Activated CD4-positive, alpha-beta memory T cell treated with anti-CD3 and anti-CD28 coated beads for 36 hours (primary cell): ENCODE measurements at regions of chr19 and their contacts with region 1.

Region 1: DNA sequence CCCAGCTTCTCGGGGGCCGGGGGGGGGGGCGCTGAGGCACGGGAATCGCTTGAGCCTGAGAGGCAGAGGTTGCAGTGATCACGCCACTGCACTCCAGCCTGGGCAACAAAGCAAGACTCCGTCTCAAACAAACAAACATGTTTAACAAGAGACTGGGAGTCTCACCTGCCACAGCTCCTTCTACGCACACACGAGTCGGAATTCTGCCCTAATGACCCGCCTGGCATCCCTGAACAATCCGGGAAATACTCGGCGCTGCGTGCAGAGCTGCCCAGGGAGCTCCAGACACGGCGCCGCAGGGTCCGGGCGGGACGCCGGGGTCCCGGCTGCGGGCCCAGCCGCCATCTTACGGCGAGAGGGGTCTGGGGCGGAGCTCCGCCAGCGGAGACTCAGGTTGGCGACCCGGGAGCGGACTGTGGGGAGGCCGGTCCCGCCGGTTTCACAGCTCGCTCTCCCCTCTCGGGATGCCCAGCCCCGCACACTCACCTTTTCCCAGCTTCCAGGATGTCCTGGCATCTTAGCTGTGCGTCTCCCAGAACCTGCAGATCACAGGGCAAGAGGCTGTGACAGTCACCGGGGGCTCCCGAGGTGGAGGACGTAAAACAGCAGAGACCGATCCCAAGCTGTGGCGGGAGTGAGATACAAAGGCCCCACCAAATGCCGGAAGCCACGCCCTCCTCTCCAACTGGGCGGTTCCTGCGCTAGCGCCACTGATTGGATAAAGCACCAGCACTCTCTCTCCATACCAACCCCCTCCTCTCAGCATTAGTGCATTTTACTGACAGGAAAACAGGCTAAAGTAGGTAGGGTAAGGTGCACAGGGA is 23.6 kb upstream of the ZNF724 start:
- DNase-seq: peak; percentile 95
- H3K4me3 Mint-ChIP-seq: peak overlapping the region; percentile 91
- H3K27ac Mint-ChIP-seq: peak overlapping the region; percentile 89
- H3K4me1 Mint-ChIP-seq: peaks cover 20% of the 10 kb centered on the region
- H3K27me3 Mint-ChIP-seq: no peaks in the 10 kb centered on the region

Region 2: GRCh38 chr19:23249911-23250649 is 23.7 kb before region 1 on chr19 and contains the start of gene ZNF724:
- CTCF ChIA-PET with region 1: interaction called, 4 read pairs
- POLR2A ChIA-PET with region 1: interaction called, 35 read pairs
- intact Hi-C with region 1: loop called (anchors 1 kb)
- DNase-seq: peak; percentile 94
- H3K4me3 Mint-ChIP-seq: peak within 1 kb of the TSS; percentile 94
- H3K27ac Mint-ChIP-seq: peak within 1 kb of the TSS; percentile 92
- H3K4me1 Mint-ChIP-seq: peaks cover 9% of the 10 kb centered on the region
- H3K27me3 Mint-ChIP-seq: no peaks in the 10 kb centered on the region
- total RNA-seq, gene ZNF724: 13.6 to 14.5 TPM

Region 3: GRCh38 chr19:23283927-23284326 is 10.1 kb after region 1 on chr19:
- CTCF ChIA-PET with region 1: interaction called, 18 read pairs
- POLR2A ChIA-PET with region 1: no interaction called
- intact Hi-C with region 1: no loop called
- DNase-seq: peak; percentile 78
- H3K4me3 Mint-ChIP-seq: no peak overlapping the region
- H3K27ac Mint-ChIP-seq: no peak overlapping the region
- H3K4me1 Mint-ChIP-seq: peaks cover 9% of the 10 kb centered on the region
- H3K27me3 Mint-ChIP-seq: no peaks in the 10 kb centered on the region

Region 4: DNA sequence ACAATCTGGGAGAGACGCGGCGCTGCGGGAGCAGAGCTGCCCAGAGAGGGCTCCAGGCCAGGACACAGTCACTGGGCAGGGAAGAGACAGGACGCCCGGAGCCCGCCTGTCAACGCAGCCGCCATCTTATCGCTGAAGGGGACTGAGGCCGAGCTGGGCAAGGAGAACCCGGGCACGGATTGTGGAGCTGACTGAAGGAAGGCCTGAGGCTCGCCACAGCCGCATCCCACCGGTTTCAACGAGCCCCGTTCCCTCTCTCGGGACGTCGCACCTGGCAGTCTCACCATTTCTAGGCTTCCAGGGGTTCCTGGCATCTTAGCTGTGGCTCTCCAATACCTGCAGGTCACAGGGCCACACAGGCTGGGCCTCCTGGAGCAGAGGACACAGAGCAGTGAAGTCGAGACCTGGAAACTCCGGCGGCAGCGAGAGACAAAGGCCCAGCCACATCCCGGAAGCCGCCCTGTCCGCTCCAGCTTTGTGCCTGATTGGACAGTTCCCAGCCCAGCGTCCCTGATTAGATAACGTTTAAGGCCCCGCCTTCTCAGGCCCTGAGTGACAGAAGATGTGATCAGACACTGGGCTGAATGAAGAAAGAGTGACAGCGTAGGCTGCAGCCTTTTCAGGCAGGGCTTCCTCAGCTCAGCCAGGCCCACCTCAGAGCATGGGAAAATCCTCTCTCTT is 121.4 kb after region 1 on chr19 and contains the start of gene ZNF91:
- CTCF ChIA-PET with region 1: no interaction called
- POLR2A ChIA-PET with region 1: interaction called, 18 read pairs
- intact Hi-C with region 1: loop called (anchors 5 kb)
- DNase-seq: peak; percentile 95
- H3K4me3 Mint-ChIP-seq: peak within 1 kb of the TSS; percentile 96
- H3K27ac Mint-ChIP-seq: peak within 1 kb of the TSS; percentile 97
- H3K4me1 Mint-ChIP-seq: peaks cover 30% of the 10 kb centered on the region
- H3K27me3 Mint-ChIP-seq: no peaks in the 10 kb centered on the region
- total RNA-seq, gene ZNF91: 34.7 to 39.0 TPM

Region 5: DNA sequence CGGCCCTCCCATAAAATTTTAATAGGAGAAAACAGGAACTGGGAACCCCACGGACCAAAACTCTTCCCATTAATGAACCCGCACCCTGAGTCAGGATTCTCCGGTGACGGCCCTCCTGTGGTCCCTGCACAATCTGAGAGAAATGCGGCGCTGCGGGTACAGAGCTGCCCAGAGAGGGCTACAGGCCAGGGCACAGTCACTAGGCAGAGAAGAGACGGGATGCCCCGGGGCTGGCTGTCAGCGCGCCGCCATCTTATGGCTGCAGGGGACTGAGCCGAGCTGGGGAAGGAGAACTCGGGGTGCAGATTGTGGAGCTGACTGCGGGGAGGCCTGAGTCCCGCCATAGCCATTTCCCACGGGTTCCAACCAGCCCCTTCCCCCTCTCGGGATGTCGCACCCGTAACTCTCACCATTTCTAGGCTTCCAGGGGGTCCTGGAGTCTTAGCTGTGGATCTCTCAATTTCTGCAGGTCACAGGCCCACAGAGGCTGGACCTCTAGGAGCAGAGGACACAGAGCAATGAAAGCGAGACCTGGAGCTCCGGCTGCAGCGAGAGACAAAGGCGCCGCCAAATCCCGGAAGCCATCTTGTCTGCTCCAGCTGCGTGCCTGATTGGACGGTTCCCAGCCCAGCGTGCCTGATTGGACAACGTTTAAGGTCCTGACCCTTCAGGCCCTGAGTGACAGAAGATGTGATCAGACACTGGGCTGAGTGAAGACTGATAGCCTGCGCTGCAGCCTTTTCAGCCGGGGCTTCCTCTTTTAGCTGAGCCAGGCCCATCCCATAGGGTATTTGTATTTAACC is 413.0 kb after region 1 on chr19 and contains the start of gene ZNF675:
- CTCF ChIA-PET with region 1: no interaction called
- POLR2A ChIA-PET with region 1: interaction called, 5 read pairs
- intact Hi-C with region 1: loop called (anchors 2 kb)
- DNase-seq: peak; percentile 93
- H3K4me3 Mint-ChIP-seq: peak within 1 kb of the TSS; percentile 97
- H3K27ac Mint-ChIP-seq: peak within 1 kb of the TSS; percentile 97
- H3K4me1 Mint-ChIP-seq: peaks cover 38% of the 10 kb centered on the region
- H3K27me3 Mint-ChIP-seq: no peaks in the 10 kb centered on the region
- total RNA-seq, gene ZNF675: 17.1 to 21.0 TPM

Region 6: GRCh38 chr19:23914402-23915301 is 640.9 kb after region 1 on chr19 and contains the start of gene ZNF726:
- CTCF ChIA-PET with region 1: no interaction called
- POLR2A ChIA-PET with region 1: interaction called, 5 read pairs
- intact Hi-C with region 1: loop called (anchors 5 kb)
- DNase-seq: peak; percentile 93
- H3K4me3 Mint-ChIP-seq: peak within 1 kb of the TSS; percentile 95
- H3K27ac Mint-ChIP-seq: peak within 1 kb of the TSS; percentile 91
- H3K4me1 Mint-ChIP-seq: peaks cover 18% of the 10 kb centered on the region
- H3K27me3 Mint-ChIP-seq: no peaks in the 10 kb centered on the region
- total RNA-seq, gene ZNF726: 15.9 to 17.3 TPM